RWPE1 (cell line): ENCODE measurements at regions of chr17 and their contacts with region 1.

Region 1: DNA sequence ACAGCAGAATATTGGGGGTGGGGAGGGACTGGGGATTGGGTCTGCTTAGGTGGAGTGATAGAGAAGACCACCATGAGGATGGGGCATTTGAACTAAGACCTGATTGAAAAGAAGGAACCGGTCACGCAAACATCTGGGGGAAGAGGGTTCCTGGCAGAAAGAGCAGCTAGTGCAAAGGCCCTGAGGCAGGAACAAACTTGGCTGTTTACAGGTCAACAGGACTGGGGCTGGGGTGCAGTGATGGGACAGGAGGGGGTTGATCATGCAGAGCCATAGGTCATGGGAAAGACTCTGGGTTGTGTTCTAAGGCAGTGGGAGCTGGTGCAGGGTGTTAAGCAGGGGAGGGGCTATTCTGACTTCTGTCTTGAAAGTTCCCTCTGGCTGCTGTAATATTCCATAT is 1.9 kb downstream of the DRG2 start:
- DNase-seq: no peak
- H3K27ac ChIP-seq: peak overlapping the region; percentile 74
- CTCF ChIP-seq: no peak

Region 2: GRCh38 chr17:17819561-17819995 is 270.0 kb before region 1 on chr17:
- CTCF ChIA-PET with region 1: no interaction called
- POLR2A ChIA-PET with region 1: interaction called, 10 read pairs
- DNase-seq: peak; percentile 81
- H3K27ac ChIP-seq: peak overlapping the region; percentile 97
- CTCF ChIP-seq: no peak